ENCODE measurements at regions of chr15 and their contacts with region 1.

Region 1: GRCh38 chr15:58269455-58270414 is 131.6 kb downstream of the AQP9 start:
- DNase-seq: peak; percentile 71
- ATAC-seq: peak; percentile 97
- H3K4me3 ChIP-seq: no peak overlapping the region; a peak in 1 of 6 replicates
- H3K27ac ChIP-seq: no peak overlapping the region
- H3K4me1 ChIP-seq: peaks cover 5% of the 10 kb centered on the region; the same call in 1 of the 2 replicates
- H3K27me3 ChIP-seq: no peaks in the 10 kb centered on the region; a peak in 1 of 5 replicates
- CTCF ChIP-seq: peak; percentile 92
- EP300 ChIP-seq: no peak
- POLR2A ChIP-seq: no peak
- RAD21 ChIP-seq: peak; percentile 93

Region 2: GRCh38 chr15:58378254-58379085 is 108.7 kb after region 1 on chr15:
- CTCF ChIA-PET with region 1: no interaction called
- POLR2A ChIA-PET with region 1: no interaction called
- in situ Hi-C with region 1: no loop called
- intact Hi-C with region 1: loop called (anchors 10 kb)
- DNase-seq: no peak
- ATAC-seq: no peak
- H3K4me3 ChIP-seq: no peak overlapping the region
- H3K27ac ChIP-seq: no peak overlapping the region
- H3K4me1 ChIP-seq: peaks cover 8% of the 10 kb centered on the region
- H3K27me3 ChIP-seq: no peaks in the 10 kb centered on the region; a peak in 1 of 5 replicates
- CTCF ChIP-seq: no peak
- EP300 ChIP-seq: no peak
- POLR2A ChIP-seq: no peak
- RAD21 ChIP-seq: no peak

Region 3: GRCh38 chr15:58628206-58628947 is 358.6 kb after region 1 on chr15:
- CTCF ChIA-PET with region 1: no interaction called
- POLR2A ChIA-PET with region 1: no interaction called
- in situ Hi-C with region 1: no loop called
- intact Hi-C with region 1: loop called (anchors 1 kb)
- DNase-seq: no peak
- ATAC-seq: no peak
- H3K4me3 ChIP-seq: no peak overlapping the region
- H3K27ac ChIP-seq: no peak overlapping the region
- H3K4me1 ChIP-seq: peaks cover 20% of the 10 kb centered on the region
- H3K27me3 ChIP-seq: no peaks in the 10 kb centered on the region
- CTCF ChIP-seq: no peak
- EP300 ChIP-seq: no peak
- POLR2A ChIP-seq: no peak
- RAD21 ChIP-seq: no peak

Region 4: DNA sequence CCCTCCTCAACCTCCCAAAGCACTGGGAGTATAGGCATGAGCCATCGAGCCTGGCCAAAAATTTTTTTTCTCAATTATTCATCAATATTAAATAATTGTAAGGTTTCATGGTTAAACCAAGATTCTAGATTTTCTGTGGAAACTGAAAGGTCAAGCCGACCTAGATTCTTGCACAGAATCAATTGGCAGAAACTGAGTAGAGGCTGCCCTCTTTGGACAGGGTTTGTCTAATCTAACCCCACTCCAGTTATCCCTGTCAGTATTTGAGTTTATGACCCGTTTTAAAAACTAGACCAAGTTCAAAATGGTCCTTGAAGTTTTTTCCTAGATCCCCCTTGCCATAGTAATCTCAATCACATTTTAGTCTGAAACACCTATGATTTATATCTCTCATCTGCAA is 488.4 kb after region 1 on chr15:
- CTCF ChIA-PET with region 1: no interaction called
- POLR2A ChIA-PET with region 1: no interaction called
- in situ Hi-C with region 1: no loop called
- intact Hi-C with region 1: loop called (anchors 1 kb)
- DNase-seq: no peak
- ATAC-seq: peak; percentile 69
- H3K4me3 ChIP-seq: no peak overlapping the region
- H3K27ac ChIP-seq: no peak overlapping the region
- H3K4me1 ChIP-seq: peaks cover 10% of the 10 kb centered on the region; the same call in 1 of the 2 replicates
- H3K27me3 ChIP-seq: no peaks in the 10 kb centered on the region
- CTCF ChIP-seq: peak; percentile 60
- EP300 ChIP-seq: no peak
- POLR2A ChIP-seq: no peak
- RAD21 ChIP-seq: no peak

Measured in HepG2 (cell line).